ENCODE measurements at regions of chr18 and their contacts with region 1.

Region 1: DNA sequence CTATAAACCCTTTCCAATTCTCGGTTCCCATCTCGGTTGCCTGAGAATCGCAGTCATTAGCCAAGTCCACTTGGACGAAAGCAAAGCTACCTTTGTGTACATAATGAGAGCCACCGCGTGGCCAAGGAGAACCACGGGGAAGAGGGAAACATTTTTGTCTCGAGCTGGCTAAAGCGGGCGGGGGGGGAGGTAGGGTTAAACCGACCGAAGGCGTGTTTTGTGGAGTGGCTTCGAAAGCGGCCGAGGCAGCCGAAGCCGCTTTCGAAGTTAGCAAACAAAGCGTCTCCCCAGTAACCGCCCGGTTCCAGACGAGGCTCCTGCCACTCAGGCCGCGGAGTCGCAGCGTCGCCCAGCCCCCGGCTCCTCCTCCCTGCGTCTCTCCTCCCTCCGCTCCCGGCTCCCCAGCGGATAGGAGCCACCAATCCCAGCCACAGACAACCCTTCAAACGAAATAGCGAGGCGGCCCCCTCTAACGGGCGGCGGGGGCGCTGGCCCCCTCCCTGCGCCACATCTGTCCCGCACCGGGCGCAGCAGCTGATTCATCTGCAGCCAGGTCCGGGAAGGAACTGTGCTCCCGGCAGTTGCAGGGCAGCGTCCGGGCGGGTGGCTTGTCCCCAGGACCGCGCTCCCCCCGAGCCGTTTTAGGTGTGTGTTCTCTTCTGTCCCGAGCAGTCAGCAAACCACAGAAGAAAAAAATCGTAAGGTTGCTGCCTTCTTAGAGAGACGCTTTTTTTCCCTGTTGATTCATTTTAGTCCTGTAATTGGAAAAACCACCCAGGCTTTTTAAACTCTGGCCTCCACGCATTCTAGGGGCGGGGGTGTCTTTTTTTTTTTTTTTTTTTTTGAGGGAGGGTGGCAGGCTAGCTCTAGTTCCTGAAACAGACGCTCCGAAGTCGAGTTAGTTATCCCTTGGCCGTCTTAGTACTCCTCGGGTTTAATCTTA is 1.8 kb upstream of the TGIF1 start:
- DNase-seq: peak; percentile 93
- H3K4me3 Mint-ChIP-seq: peak overlapping the region; percentile 86
- H3K27ac Mint-ChIP-seq: peak overlapping the region; percentile 93
- H3K4me1 Mint-ChIP-seq: peaks cover 25% of the 10 kb centered on the region
- H3K27me3 Mint-ChIP-seq: no peaks in the 10 kb centered on the region

Region 2: GRCh38 chr18:2958819-2959298 is 489.3 kb before region 1 on chr18:
- CTCF ChIA-PET with region 1: no interaction called
- POLR2A ChIA-PET with region 1: no interaction called
- intact Hi-C with region 1: loop called (anchors 5 kb)
- DNase-seq: peak; percentile 64
- H3K4me3 Mint-ChIP-seq: peak overlapping the region; percentile 62
- H3K27ac Mint-ChIP-seq: peak overlapping the region; percentile 100
- H3K4me1 Mint-ChIP-seq: peaks cover 92% of the 10 kb centered on the region
- H3K27me3 Mint-ChIP-seq: no peaks in the 10 kb centered on the region

Region 3: GRCh38 chr18:3297025-3297984 is 150.9 kb before region 1 on chr18:
- CTCF ChIA-PET with region 1: interaction called, 13 read pairs
- POLR2A ChIA-PET with region 1: interaction called, 6 read pairs
- intact Hi-C with region 1: loop called (anchors 1 kb)
- DNase-seq: peak; percentile 97
- H3K4me3 Mint-ChIP-seq: peak overlapping the region; percentile 87
- H3K27ac Mint-ChIP-seq: peak overlapping the region; percentile 52
- H3K4me1 Mint-ChIP-seq: peaks cover 8% of the 10 kb centered on the region
- H3K27me3 Mint-ChIP-seq: peaks cover 17% of the 10 kb centered on the region

Region 4: DNA sequence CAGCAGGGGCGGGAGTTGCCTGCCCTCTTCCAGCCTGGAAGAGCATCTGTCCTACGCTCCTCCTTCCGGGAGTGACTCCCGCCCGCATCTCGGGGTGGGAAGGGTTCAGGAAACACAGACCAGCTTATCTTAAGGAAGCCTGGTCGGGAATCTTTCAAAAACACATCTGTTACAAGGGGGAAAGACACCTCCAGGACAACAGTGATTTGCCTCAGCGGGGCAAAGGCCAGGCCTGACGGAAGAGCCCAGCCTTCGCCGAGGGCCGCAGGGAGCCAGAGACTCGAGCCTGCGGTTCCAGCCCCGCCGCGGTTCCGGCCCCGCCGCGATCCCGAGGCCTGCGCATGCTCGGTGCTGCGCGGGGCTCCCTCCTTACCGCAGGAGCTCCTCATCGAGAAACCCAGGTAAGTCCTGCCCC is 36.3 kb before region 1 on chr18:
- CTCF ChIA-PET with region 1: no interaction called
- POLR2A ChIA-PET with region 1: interaction called, 3 read pairs
- intact Hi-C with region 1: loop called (anchors 1 kb)
- DNase-seq: peak; percentile 42
- H3K4me3 Mint-ChIP-seq: peak overlapping the region; percentile 25
- H3K27ac Mint-ChIP-seq: peak overlapping the region; percentile 8
- H3K4me1 Mint-ChIP-seq: peaks cover 16% of the 10 kb centered on the region
- H3K27me3 Mint-ChIP-seq: no peaks in the 10 kb centered on the region

Region 5: DNA sequence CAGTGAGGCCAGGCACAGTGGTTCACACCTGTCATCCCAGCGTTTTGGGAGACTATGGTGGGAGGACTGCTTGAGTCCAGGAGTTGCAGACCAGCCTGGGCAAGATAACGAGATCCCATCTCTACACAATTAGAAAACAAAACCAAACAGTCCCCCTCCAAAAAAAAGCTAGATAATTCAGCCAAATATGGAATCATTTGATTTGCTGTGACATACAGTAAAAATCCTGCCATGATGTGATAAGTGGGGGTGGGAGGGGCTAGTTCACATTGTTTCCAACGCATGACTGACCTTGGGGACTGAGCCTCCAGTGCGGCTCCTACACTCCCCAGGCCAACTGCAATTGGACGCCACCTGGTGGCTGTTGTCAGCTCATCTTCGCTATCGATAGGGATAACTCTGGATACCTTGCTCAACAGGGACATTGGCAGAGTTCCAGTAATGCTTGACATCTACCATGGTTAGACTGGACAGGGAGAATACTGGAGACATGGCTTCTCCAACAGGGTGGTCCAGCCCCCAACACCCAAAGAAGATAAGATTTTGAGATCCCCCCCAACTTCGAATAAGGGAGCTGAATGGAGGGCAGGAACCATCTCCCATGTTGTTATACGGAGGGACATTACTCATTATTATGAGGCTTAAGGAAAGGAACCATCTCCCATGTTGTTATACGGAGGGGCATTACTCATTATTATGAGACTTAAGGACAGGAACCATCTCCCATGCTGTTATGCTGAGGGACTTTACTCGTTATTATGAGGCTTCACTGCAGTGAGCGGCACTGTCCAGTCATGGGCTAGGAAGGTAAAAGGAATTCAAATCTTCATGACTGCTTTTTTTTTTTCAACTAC is 137.7 kb after region 1 on chr18:
- CTCF ChIA-PET with region 1: interaction called, 43 read pairs
- POLR2A ChIA-PET with region 1: interaction called, 10 read pairs
- intact Hi-C with region 1: no loop called
- DNase-seq: peak; percentile 86
- H3K4me3 Mint-ChIP-seq: no peak overlapping the region
- H3K27ac Mint-ChIP-seq: peak overlapping the region; percentile 69
- H3K4me1 Mint-ChIP-seq: peaks cover 45% of the 10 kb centered on the region
- H3K27me3 Mint-ChIP-seq: no peaks in the 10 kb centered on the region

Region 6: GRCh38 chr18:3665780-3666525 is 217.8 kb after region 1 on chr18:
- CTCF ChIA-PET with region 1: interaction called, 39 read pairs
- POLR2A ChIA-PET with region 1: interaction called, 4 read pairs
- intact Hi-C with region 1: loop called (anchors 2 kb)
- DNase-seq: peak; percentile 81
- H3K4me3 Mint-ChIP-seq: no peak overlapping the region
- H3K27ac Mint-ChIP-seq: no peak overlapping the region
- H3K4me1 Mint-ChIP-seq: peaks cover 23% of the 10 kb centered on the region
- H3K27me3 Mint-ChIP-seq: no peaks in the 10 kb centered on the region